Activated CD4-positive, alpha-beta T cell treated with anti-CD3 and anti-CD28 coated beads for 36 hours (primary cell): ENCODE measurements at regions of chr5 and their contacts with region 1.

Region 1: DNA sequence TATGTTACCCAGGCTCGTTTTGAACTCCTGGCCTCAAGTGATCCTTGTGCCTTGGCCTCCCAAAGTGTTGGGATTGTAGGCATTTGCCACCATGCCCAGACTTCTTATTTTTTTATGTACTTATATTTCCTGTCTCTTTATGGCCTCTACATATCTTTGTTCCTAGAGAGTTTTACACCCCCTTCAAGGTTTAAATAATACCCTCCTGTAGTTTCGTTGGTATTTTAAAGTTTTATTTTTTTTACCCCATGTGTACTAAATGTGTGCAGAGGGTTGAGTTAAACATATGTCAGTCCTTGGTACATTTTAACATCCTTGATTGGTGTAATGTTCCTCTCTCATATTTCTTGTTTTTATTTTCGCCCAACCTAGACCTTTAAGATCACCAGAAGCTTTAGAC is 29.4 kb downstream of the OCLN start:
- DNase-seq: no peak
- ATAC-seq: no peak
- H3K4me3 Mint-ChIP-seq: no peak overlapping the region
- H3K27ac Mint-ChIP-seq: no peak overlapping the region
- H3K4me1 Mint-ChIP-seq: no peaks in the 10 kb centered on the region
- H3K27me3 Mint-ChIP-seq: peaks cover 5% of the 10 kb centered on the region

Region 2: DNA sequence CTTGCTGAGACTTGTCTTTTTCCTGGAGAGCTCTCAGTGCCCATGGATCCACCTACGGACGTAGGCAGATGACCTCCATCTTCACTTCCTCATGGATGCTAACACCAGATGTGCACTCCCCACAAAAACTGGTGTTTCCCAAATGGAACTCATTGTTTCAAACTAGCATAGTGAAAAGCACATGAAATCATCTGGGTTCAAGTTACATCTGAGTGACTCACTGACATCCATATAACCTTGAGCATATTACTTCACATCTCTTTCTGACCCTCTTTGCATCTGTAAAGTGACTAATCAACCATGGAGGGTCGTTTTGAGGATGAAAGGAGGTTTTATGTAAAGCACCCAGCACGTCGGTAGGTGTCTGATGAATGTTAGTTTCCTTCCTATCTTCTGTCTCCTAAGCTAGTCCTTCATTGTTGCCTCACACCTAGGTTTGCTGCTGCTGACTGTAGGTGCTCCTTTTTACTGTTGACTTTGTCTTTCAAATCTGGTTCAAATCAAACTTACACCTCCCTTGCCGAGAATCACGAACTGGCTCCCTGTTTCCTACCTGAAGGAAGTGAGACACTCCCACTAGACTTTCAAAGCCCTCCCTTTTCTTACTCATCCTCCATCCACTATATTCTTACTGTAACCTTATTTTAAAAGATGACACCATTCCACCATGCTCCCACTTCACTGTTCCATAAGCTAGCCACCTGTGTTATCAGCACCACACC is 19.1 kb before region 1 on chr5:
- CTCF ChIA-PET with region 1: interaction called, 3 read pairs
- POLR2A ChIA-PET with region 1: no interaction called
- intact Hi-C with region 1: loop called in 1 of 2 experiments (anchors 2 kb)
- DNase-seq: no peak
- ATAC-seq: no peak
- H3K4me3 Mint-ChIP-seq: no peak overlapping the region
- H3K27ac Mint-ChIP-seq: no peak overlapping the region
- H3K4me1 Mint-ChIP-seq: no peaks in the 10 kb centered on the region
- H3K27me3 Mint-ChIP-seq: peaks cover 5% of the 10 kb centered on the region